ENCODE measurements at regions of chr3 and their contacts with region 1.

Region 1: GRCh38 chr3:48716982-48717746 is at the start of gene IP6K2:
- DNase-seq: peak; percentile 92 to 99 (median 97)
- ATAC-seq: peak; percentile 100
- H3K4me3 ChIP-seq: peak within 1 kb of the TSS; percentile 99
- H3K4me3 Mint-ChIP-seq: peak within 1 kb of the TSS; percentile 94 to 99 (median 98)
- H3K27ac ChIP-seq: peak within 1 kb of the TSS; percentile 84
- H3K27ac Mint-ChIP-seq: peak within 1 kb of the TSS; percentile 83 to 99 (median 96)
- H3K4me1 ChIP-seq: peaks cover 23 to 29% of the 10 kb centered on the region in 2 donors
- H3K4me1 Mint-ChIP-seq: peaks cover 33 to 46% (median 39%) of the 10 kb centered on the region in 7 donors
- H3K27me3 ChIP-seq: no peaks in the 10 kb centered on the region
- H3K27me3 Mint-ChIP-seq: peaks cover 0 to 22% (median 0%) of the 10 kb centered on the region in 5 donors
- total RNA-seq, gene IP6K2: 72.0 to 94.3 (median 85.9) TPM

Region 2: GRCh38 chr3:48301020-48301796 is 416.0 kb before region 1 on chr3:
- CTCF ChIA-PET with region 1: no interaction called
- POLR2A ChIA-PET with region 1: no interaction called
- intact Hi-C with region 1: loop called in 1 of 2 experiments (anchors 1 kb)
- DNase-seq: peak; percentile 69 to 95 (median 81)
- ATAC-seq: peak; percentile 97
- H3K4me3 ChIP-seq: peak within 1 kb of the TSS; percentile 89
- H3K4me3 Mint-ChIP-seq: peak within 1 kb of the TSS; percentile 84 to 97 (median 91)
- H3K27ac ChIP-seq: peak within 1 kb of the TSS; percentile 96
- H3K27ac Mint-ChIP-seq: peak within 1 kb of the TSS; percentile 81 to 98 (median 94)
- H3K4me1 ChIP-seq: peaks cover 10 to 12% of the 10 kb centered on the region in 2 donors
- H3K4me1 Mint-ChIP-seq: peaks cover 26 to 47% (median 40%) of the 10 kb centered on the region in 7 donors
- H3K27me3 ChIP-seq: no peaks in the 10 kb centered on the region
- H3K27me3 Mint-ChIP-seq: peaks cover 0 to 13% (median 0%) of the 10 kb centered on the region in 5 donors

Region 3: GRCh38 chr3:48318783-48319468 is 398.2 kb before region 1 on chr3:
- CTCF ChIA-PET with region 1: no interaction called
- POLR2A ChIA-PET with region 1: no interaction called
- intact Hi-C with region 1: no loop called
- DNase-seq: no peak
- ATAC-seq: no peak
- H3K4me3 ChIP-seq: no peak overlapping the region
- H3K4me3 Mint-ChIP-seq: no peak overlapping the region
- H3K27ac ChIP-seq: no peak overlapping the region
- H3K27ac Mint-ChIP-seq: no peak overlapping the region
- H3K4me1 ChIP-seq: peaks cover 0 to 5% of the 10 kb centered on the region in 2 donors
- H3K4me1 Mint-ChIP-seq: peaks cover 0 to 11% (median 8%) of the 10 kb centered on the region in 7 donors
- H3K27me3 ChIP-seq: no peaks in the 10 kb centered on the region
- H3K27me3 Mint-ChIP-seq: peaks cover 0 to 22% (median 9%) of the 10 kb centered on the region in 5 donors

Region 4: DNA sequence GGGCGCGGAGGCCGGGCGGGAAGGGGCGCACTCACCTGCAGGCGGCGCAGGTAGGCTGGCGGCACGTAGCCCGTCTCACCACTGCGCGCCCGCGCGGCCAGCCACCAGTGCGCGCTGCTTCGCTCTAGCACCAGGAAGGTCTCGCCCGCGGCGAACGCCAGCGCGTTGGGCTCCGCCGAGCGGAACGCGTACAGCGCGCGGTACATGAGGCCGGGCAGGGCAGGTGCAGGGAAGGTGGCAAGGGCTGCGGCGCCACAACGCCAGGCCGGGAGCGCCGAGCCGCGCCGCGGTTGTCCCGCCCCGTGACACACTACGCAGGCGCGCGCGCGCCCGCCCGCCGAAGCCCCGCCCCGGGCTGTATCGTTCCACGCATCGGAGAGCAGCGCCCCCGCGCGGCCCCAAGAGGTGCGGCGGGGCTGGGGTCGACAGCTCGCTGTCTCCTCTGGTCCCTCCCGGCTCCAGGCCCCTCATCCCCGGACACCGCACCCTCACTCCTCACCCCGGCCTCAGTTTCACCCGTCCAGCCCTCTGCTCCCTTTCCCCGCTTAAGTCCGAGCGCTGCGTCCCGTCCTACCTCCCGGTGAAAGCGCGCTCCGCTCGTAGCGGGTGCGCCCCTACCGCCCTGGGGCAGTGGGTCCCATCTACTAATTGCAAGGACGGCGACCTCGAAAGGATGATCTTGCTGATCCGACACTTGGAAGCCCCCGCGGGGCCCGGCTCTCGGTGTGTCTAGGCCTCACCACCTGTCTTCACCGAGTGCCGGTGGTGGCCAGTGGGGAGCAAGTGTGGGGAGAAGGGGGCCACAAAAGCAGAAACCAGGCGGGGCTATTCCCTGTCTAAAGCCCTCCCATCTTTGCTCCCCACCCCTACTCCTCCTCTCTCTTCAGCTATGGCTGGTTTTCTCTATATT is 31.3 kb before region 1 on chr3 and contains the start of gene NCKIPSD:
- CTCF ChIA-PET with region 1: interaction called, 6 read pairs
- POLR2A ChIA-PET with region 1: interaction called, 3 read pairs
- intact Hi-C with region 1: loop called (anchors 1 kb)
- DNase-seq: peak; percentile 83 to 96 (median 92)
- ATAC-seq: peak; percentile 97
- H3K4me3 ChIP-seq: peak within 1 kb of the TSS; percentile 92
- H3K4me3 Mint-ChIP-seq: peak within 1 kb of the TSS; percentile 88 to 95 (median 93)
- H3K27ac ChIP-seq: peak within 1 kb of the TSS; percentile 79
- H3K27ac Mint-ChIP-seq: peak within 1 kb of the TSS; percentile 73 to 94 (median 89)
- H3K4me1 ChIP-seq: peaks cover 8 to 18% of the 10 kb centered on the region in 2 donors
- H3K4me1 Mint-ChIP-seq: peaks cover 29 to 38% (median 33%) of the 10 kb centered on the region in 7 donors
- H3K27me3 ChIP-seq: no peaks in the 10 kb centered on the region
- H3K27me3 Mint-ChIP-seq: no peaks in the 10 kb centered on the region
- total RNA-seq, gene NCKIPSD: 13.7 to 42.1 (median 20.3) TPM

Region 5: DNA sequence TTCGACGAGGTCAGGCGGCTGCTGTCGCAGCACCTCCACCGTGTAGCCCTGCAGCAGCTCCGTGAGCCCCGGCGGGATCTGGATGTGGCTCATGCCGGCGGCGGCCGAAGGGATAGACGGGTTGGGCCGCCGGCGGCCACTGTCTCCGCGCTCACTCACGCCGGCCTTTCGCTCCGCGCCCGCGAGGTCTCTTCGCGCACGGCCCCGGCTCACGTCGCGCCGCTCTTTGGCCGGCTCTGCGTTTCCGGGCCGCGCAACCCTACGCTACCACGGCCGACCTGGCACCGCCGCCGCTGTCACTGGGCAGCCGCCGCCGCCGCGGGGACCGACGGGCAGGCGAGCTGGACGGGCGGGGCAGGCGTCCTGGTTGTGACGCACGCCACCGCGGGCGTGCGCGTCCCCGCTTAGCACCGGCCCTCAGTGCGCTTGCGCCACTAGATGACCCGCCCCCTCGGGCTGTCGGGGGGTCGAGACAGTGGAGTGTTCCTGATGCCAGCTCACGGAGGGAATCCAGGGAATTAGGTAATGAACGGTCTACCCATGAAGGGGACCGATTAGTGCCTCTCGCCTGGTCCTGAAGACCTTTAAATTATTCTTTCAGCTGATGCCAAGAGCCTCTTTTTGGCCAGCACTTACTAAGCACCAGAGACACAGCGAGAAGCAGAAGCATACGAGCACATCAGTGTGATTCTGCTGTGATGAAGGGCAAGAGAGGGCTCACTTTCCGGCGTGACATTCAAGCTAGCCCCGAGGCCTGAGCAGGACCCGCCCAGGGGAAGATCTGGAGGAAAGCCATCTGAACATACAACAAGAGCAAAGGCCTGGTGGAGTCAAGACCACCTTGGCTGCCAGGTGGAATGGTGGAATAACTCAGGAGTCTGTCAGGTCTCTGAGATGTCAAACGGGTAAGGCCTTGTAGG is 130.6 kb after region 1 on chr3 and contains the start of gene PRKAR2A:
- CTCF ChIA-PET with region 1: no interaction called
- POLR2A ChIA-PET with region 1: interaction called, 9 read pairs
- intact Hi-C with region 1: loop called in 1 of 2 experiments (anchors 2 kb)
- DNase-seq: peak; percentile 51 to 87 (median 67)
- ATAC-seq: peak; percentile 92
- H3K4me3 ChIP-seq: peak within 1 kb of the TSS; percentile 70
- H3K4me3 Mint-ChIP-seq: peak within 1 kb of the TSS; percentile 86 to 93 (median 90)
- H3K27ac ChIP-seq: peak within 1 kb of the TSS; percentile 79
- H3K27ac Mint-ChIP-seq: peak within 1 kb of the TSS; percentile 81 to 98 (median 94)
- H3K4me1 ChIP-seq: peaks cover 15 to 21% of the 10 kb centered on the region in 2 donors
- H3K4me1 Mint-ChIP-seq: peaks cover 12 to 34% (median 28%) of the 10 kb centered on the region in 7 donors
- H3K27me3 ChIP-seq: no peaks in the 10 kb centered on the region
- H3K27me3 Mint-ChIP-seq: no peaks in the 10 kb centered on the region
- total RNA-seq, gene PRKAR2A: 25.9 to 45.1 (median 38.9) TPM

Region 6: GRCh38 chr3:49021813-49022687 is 304.9 kb after region 1 on chr3 and contains the start of gene NDUFAF3:
- CTCF ChIA-PET with region 1: no interaction called
- POLR2A ChIA-PET with region 1: interaction called, 3 read pairs
- intact Hi-C with region 1: loop called (anchors 2 kb)
- DNase-seq: peak; percentile 84 to 96 (median 89)
- ATAC-seq: peak; percentile 89
- H3K4me3 ChIP-seq: peak within 1 kb of the TSS; percentile 99
- H3K4me3 Mint-ChIP-seq: peak within 1 kb of the TSS; percentile 92 to 99 (median 97)
- H3K27ac ChIP-seq: peak within 1 kb of the TSS; percentile 98
- H3K27ac Mint-ChIP-seq: peak within 1 kb of the TSS; percentile 95 to 99 (median 98)
- H3K4me1 ChIP-seq: peaks cover 24 to 25% of the 10 kb centered on the region in 2 donors
- H3K4me1 Mint-ChIP-seq: peaks cover 21 to 61% (median 47%) of the 10 kb centered on the region in 7 donors
- H3K27me3 ChIP-seq: no peaks in the 10 kb centered on the region
- H3K27me3 Mint-ChIP-seq: peaks cover 0 to 2% (median 0%) of the 10 kb centered on the region in 5 donors
- total RNA-seq, gene NDUFAF3: 63.8 to 110 (median 89.3) TPM

Region 7: DNA sequence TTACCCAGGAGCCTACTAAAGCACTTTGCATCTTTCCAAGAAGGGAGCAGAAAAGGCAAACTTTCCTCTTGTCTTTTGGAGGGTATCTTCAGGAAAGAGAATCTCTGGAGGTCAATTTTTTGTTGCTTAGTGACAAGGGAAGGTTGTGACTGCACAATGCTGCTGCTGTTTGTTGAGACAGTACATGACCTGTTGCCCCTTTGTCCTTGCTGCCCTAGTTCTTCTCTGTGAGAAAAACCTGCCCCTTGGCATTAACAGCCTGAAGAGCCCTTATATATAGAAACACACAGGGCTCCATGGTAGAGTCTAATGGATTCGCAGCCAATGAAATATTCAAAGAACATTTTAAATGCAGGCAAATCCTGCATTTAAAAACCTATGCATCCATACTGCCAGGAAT is 474.6 kb after region 1 on chr3:
- CTCF ChIA-PET with region 1: interaction called, 10 read pairs
- POLR2A ChIA-PET with region 1: no interaction called
- intact Hi-C with region 1: no loop called
- DNase-seq: no peak
- ATAC-seq: no peak
- H3K4me3 ChIP-seq: no peak overlapping the region
- H3K4me3 Mint-ChIP-seq: no peak overlapping the region
- H3K27ac ChIP-seq: no peak overlapping the region
- H3K27ac Mint-ChIP-seq: no peak overlapping the region
- H3K4me1 ChIP-seq: no peaks in the 10 kb centered on the region
- H3K4me1 Mint-ChIP-seq: no peaks in the 10 kb centered on the region
- H3K27me3 ChIP-seq: no peaks in the 10 kb centered on the region
- H3K27me3 Mint-ChIP-seq: peaks cover 0 to 16% (median 0%) of the 10 kb centered on the region in 5 donors

Measured in naive thymus-derived CD4-positive, alpha-beta T cell (primary cell).